Transverse colon (tissue), 4 donors: ENCODE measurements at regions of chr2 and their contacts with region 1.

Region 1: GRCh38 chr2:237590272-237591140 is at the start of gene RAB17:
- DNase-seq: peak; percentile 82
- H3K4me3 ChIP-seq: peak within 1 kb of the TSS in 3 of 4 donors; percentile 20 to 39 (median 28)
- H3K27ac ChIP-seq: peak within 1 kb of the TSS; percentile 69 to 86 (median 74)
- H3K4me1 ChIP-seq: peaks cover 0 to 24% (median 7%) of the 10 kb centered on the region in 4 donors
- H3K27me3 ChIP-seq: no peaks in the 10 kb centered on the region
- CTCF ChIP-seq: no peak
- EP300 ChIP-seq: no peak
- POLR2A ChIP-seq: peak; percentile 63
- total RNA-seq, gene RAB17: 25.1 to 104 (median 65.6) TPM

Region 2: DNA sequence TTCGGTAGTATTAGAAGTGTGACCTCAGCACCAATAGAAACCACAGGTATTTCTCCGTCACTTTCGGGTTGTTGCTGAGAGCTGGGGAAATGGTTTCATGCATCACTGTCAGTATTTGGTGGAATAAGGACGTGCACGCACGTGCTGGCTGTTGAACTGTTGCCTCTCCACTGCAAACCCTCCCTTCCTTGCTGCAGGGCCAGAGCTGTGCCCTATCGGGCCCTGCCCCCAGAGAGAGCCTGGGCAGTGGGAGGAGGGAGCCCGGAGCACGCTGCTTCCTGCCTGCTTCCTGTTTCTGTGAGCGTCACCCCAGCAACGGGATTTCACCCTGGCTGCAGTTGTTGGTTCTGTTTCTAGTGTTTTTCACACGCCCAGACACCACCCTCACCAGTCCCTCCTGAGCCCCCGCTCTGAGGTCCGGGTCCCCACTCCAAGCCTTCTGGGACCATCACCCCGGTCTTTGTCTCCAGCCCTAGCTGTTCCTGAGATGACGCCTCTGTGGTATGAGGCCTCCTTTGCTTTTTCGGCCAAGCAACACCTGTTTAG is 84.3 kb after region 1 on chr2:
- in situ Hi-C with region 1: no loop called
- intact Hi-C with region 1: loop called (anchors 10 kb)
- DNase-seq: peak; percentile 88
- H3K4me3 ChIP-seq: peak overlapping the region in 1 of 4 donors; percentile 29
- H3K27ac ChIP-seq: peak overlapping the region; percentile 79 to 84 (median 82)
- H3K4me1 ChIP-seq: peaks cover 30 to 71% (median 47%) of the 10 kb centered on the region in 4 donors
- H3K27me3 ChIP-seq: no peaks in the 10 kb centered on the region
- CTCF ChIP-seq: peak in 1 of 5 experiments; percentile 44
- EP300 ChIP-seq: peak; percentile 42
- POLR2A ChIP-seq: peak; percentile 27